Activated CD4-positive, alpha-beta T cell treated with anti-CD3 and anti-CD28 coated beads for 36 hours (primary cell): ENCODE measurements at regions of chr1 and their contacts with region 1.

Region 1: DNA sequence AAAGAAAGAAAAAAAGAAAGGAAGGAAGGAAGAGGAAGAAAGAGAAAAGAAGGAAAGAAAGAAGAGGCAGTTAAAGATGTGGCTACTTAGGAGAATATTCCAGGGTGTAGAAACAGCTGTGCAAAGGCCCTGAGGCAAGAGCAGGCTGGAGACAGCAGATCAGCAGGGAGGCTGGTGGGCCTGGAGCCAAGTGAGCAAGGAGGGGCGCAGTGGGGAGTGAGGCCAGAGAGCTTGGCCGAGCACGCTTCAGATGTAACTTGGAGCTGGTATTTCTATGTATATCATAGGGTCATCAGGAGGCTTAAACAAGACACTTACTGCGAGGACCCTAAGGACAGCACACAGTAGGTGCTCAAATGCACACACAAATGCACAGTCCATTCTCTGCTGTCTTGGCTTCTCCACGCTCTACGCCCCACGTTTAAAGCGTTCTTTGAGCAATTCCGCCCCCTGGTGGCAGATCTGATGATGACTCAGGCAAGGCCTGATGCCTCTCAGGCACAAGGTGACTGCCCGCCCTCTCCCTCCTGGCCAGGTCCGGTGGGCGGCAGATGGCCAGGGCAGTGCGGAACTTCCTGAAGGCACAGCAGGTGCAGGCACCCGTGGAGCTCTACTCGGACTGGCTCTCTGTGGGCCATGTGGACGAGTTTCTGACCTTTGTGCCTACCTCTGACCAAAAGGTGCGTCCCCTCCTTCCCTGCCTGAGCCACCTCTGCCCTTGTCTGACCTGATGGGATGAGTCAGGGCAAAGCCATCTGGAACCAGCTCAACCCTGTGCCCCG is 11.9 kb upstream of the PADI3 start:
- DNase-seq: peak; percentile 94
- ATAC-seq: peak; percentile 84
- H3K4me3 Mint-ChIP-seq: no peak overlapping the region
- H3K27ac Mint-ChIP-seq: no peak overlapping the region
- H3K4me1 Mint-ChIP-seq: no peaks in the 10 kb centered on the region
- H3K27me3 Mint-ChIP-seq: peaks cover 2% of the 10 kb centered on the region

Region 2: GRCh38 chr1:16954579-16954978 is 282.4 kb before region 1 on chr1:
- CTCF ChIA-PET with region 1: no interaction called
- POLR2A ChIA-PET with region 1: no interaction called
- intact Hi-C with region 1: loop called (anchors 5 kb)
- DNase-seq: no peak
- ATAC-seq: no peak
- H3K4me3 Mint-ChIP-seq: no peak overlapping the region
- H3K27ac Mint-ChIP-seq: no peak overlapping the region
- H3K4me1 Mint-ChIP-seq: no peaks in the 10 kb centered on the region
- H3K27me3 Mint-ChIP-seq: no peaks in the 10 kb centered on the region

Region 3: DNA sequence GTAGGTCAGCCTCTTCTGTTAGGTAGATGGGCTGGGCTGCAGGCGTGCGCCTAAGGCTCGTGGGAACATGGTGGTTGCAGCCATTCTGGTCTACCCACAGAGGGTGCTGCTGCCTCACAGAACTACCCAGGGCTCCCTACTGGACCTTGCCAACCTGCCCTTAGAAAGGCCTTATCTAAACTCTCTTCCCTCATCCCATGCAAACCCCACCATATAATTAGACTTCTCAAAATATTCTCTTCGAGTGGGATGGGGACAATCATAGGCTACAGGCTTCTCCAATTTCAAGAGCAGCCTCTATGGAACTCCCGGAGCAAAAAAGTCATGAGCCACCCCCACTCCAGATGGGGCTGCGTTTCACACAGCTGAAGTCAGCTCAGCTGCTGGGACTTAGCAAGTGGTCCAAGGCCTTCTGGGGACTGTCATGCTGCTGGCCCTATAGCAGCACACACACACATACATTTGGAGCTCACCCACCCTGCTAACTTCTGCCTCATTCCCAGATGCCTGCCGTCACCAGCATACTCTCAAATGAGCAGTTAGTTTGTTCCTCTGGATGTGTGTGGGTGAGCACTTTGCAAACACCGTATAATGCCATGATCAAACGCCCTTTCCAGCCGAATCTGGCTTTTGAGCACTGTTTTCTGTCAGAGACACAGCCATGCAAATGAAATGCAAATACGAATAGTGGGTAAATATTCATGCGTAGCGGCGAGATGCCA is 177.1 kb before region 1 on chr1:
- CTCF ChIA-PET with region 1: no interaction called
- POLR2A ChIA-PET with region 1: no interaction called
- intact Hi-C with region 1: loop called (anchors 1 to 5 kb)
- DNase-seq: peak; percentile 65
- ATAC-seq: peak; percentile 84
- H3K4me3 Mint-ChIP-seq: no peak overlapping the region
- H3K27ac Mint-ChIP-seq: no peak overlapping the region
- H3K4me1 Mint-ChIP-seq: no peaks in the 10 kb centered on the region
- H3K27me3 Mint-ChIP-seq: peaks cover 3% of the 10 kb centered on the region

Region 4: GRCh38 chr1:17119076-17119772 is 117.7 kb before region 1 on chr1 and contains the start of gene PADI2:
- CTCF ChIA-PET with region 1: interaction called, 103 read pairs
- POLR2A ChIA-PET with region 1: no interaction called
- intact Hi-C with region 1: no loop called
- DNase-seq: peak; percentile 81
- ATAC-seq: peak; percentile 98
- H3K4me3 Mint-ChIP-seq: peak within 1 kb of the TSS; percentile 3
- H3K27ac Mint-ChIP-seq: no peak within 1 kb of the TSS
- H3K4me1 Mint-ChIP-seq: peaks cover 7% of the 10 kb centered on the region
- H3K27me3 Mint-ChIP-seq: peaks cover 30% of the 10 kb centered on the region
- total RNA-seq, gene PADI2: 0.05 TPM in 1 of 2 experiments, not detected in the other

Region 5: DNA sequence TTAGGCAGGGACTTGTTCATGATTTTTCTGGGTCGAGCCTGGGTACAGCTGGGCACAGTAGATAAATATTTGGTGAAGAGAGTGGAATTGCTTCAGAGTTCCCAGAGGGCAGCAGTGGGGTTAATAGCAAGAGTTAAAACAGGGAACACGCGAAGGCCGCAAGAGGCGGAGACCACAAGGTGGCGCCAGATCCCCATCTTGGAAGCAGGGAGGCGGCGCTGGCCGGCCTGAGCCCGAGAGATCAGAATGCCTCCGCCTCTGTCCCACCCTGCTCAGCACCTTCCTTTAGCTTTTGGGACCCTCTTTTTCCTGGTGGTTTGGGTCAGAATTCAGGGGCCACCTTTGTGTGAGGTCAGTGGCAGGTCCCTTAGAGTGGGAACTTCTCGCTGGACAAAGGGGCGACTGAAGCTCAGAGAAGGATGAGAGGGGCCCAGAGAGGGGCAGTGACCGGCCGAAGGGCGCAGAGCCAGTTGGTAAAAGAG is 111.2 kb before region 1 on chr1:
- CTCF ChIA-PET with region 1: interaction called, 103 read pairs
- POLR2A ChIA-PET with region 1: no interaction called
- intact Hi-C with region 1: loop called (anchors 1 kb)
- DNase-seq: peak; percentile 91
- ATAC-seq: peak; percentile 93
- H3K4me3 Mint-ChIP-seq: no peak overlapping the region
- H3K27ac Mint-ChIP-seq: no peak overlapping the region
- H3K4me1 Mint-ChIP-seq: no peaks in the 10 kb centered on the region
- H3K27me3 Mint-ChIP-seq: peaks cover 4% of the 10 kb centered on the region

Region 6: GRCh38 chr1:17355898-17356297 is 118.9 kb after region 1 on chr1:
- CTCF ChIA-PET with region 1: no interaction called
- POLR2A ChIA-PET with region 1: no interaction called
- intact Hi-C with region 1: no loop called
- DNase-seq: peak; percentile 18
- ATAC-seq: peak; percentile 26
- H3K4me3 Mint-ChIP-seq: no peak overlapping the region
- H3K27ac Mint-ChIP-seq: no peak overlapping the region
- H3K4me1 Mint-ChIP-seq: peaks cover 6% of the 10 kb centered on the region
- H3K27me3 Mint-ChIP-seq: no peaks in the 10 kb centered on the region